MCF 10A (cell line): ENCODE measurements at regions of chr10 and their contacts with region 1.

Region 1: DNA sequence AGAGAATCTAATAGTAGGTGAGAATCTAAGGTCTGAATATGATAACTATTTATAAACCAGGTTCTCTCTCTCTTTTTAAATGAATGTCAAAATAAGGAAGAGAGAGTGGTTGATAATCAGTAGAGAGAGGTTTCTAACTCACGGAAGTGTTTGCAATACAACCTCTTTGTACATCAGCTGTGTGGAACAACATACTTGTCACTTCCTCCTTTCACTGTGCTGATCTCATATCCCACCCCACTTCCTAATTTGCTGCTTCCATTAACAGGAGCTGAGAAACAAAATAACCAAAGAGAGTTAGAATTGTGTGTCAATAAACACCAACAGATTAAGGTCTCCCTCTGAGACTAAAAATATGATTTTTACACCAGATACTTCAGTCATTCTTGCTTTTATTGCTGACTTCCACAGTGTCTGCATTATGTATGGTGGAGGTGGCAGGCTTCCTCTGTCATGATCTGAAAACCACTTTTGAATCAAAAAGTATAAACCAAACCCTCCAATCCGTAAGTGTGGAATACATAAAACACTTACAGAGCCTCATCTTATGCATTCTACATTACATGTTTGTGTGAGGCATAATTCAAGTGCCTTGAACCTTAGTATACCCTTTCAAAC is 25.0 kb downstream of the CACUL1 start:
- DNase-seq: no peak
- H3K4me3 Mint-ChIP-seq: no peak overlapping the region
- H3K27ac Mint-ChIP-seq: no peak overlapping the region
- H3K4me1 Mint-ChIP-seq: peaks cover 48% of the 10 kb centered on the region
- H3K27me3 Mint-ChIP-seq: no peaks in the 10 kb centered on the region
- CTCF ChIP-seq: no peak

Region 2: GRCh38 chr10:117312430-117312829 is 1417.3 kb before region 1 on chr10:
- CTCF ChIA-PET with region 1: no interaction called
- POLR2A ChIA-PET with region 1: no interaction called
- intact Hi-C with region 1: no loop called
- DNase-seq: no peak
- H3K4me3 Mint-ChIP-seq: no peak overlapping the region
- H3K27ac Mint-ChIP-seq: no peak overlapping the region
- H3K4me1 Mint-ChIP-seq: peaks cover 10% of the 10 kb centered on the region
- H3K27me3 Mint-ChIP-seq: no peaks in the 10 kb centered on the region
- CTCF ChIP-seq: no peak

Region 3: DNA sequence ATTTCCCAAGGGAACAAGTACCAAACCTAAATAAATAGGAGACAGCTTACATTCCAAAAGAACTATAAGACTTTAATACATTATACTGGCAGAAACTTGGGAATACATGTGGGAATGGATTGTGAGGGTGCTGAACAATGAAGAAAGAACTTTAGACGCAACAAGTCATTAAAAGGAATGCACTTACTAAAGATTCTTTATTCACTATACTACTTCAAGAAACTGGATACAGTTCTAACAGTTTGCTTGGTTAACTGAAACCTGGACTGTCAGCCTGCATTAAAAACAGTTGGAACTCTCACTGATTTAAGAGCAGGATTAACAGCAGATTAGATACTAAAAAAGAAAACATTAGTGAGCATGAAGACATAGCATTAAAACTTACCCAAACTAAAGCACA is 13.0 kb after region 1 on chr10:
- CTCF ChIA-PET with region 1: interaction called, 5 read pairs
- POLR2A ChIA-PET with region 1: interaction called, 17 read pairs
- intact Hi-C with region 1: no loop called
- DNase-seq: no peak
- H3K4me3 Mint-ChIP-seq: peak overlapping the region; percentile 17
- H3K27ac Mint-ChIP-seq: peak overlapping the region; percentile 81
- H3K4me1 Mint-ChIP-seq: peaks cover 64% of the 10 kb centered on the region
- H3K27me3 Mint-ChIP-seq: no peaks in the 10 kb centered on the region
- CTCF ChIP-seq: no peak